CD14-positive monocyte (primary cell): ENCODE measurements at regions of chr14 and their contacts with region 1.

Region 1: GRCh38 chr14:105527661-105528581 is 1.5 kb downstream of the TMEM121 start:
- DNase-seq: peak; percentile 59 to 74 (median 61)
- H3K4me3 ChIP-seq: peak overlapping the region; percentile 28 to 75 (median 31)
- H3K4me3 Mint-ChIP-seq: peak overlapping the region; percentile 56 to 83
- H3K27ac ChIP-seq: no peak overlapping the region
- H3K27ac Mint-ChIP-seq: no peak overlapping the region
- H3K4me1 ChIP-seq: peaks cover 30 to 35% of the 10 kb centered on the region in 2 donors
- H3K4me1 Mint-ChIP-seq: peaks cover 28% of the 10 kb centered on the region
- H3K27me3 ChIP-seq: peaks cover 36 to 57% of the 10 kb centered on the region in 2 donors
- H3K27me3 Mint-ChIP-seq: peaks cover 46 to 84% (median 60%) of the 10 kb centered on the region in 3 donors
- CTCF ChIP-seq: peak; percentile 93

Region 2: DNA sequence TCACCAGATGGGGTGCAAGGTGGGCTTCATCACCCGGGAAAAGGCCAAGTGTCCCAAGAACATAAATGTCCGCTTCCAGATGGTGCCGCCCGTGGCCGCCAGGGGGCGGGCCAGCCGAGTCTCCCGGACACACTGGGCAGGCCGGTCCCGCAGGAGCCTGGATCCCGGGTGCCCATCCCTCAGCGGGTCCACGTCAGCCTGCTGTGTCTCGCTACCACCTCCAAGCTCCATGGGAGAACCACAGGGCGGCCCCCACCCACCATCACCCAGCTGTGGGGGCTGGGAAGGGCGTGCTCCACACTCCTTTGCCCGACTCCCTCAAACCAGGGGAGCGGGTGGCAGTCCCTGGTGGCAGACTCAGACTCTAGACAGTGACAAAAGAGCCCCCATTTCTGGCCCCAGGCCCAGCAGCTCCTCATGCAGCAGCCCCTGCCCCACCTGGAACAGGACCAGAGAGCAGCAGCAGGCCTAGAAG is 324.8 kb before region 1 on chr14:
- intact Hi-C with region 1: loop called in 1 of 2 experiments (anchors 5 kb)
- DNase-seq: peak; percentile 42 to 59 (median 57)
- H3K4me3 ChIP-seq: no peak overlapping the region
- H3K4me3 Mint-ChIP-seq: no peak overlapping the region
- H3K27ac ChIP-seq: no peak overlapping the region
- H3K27ac Mint-ChIP-seq: no peak overlapping the region
- H3K4me1 ChIP-seq: peaks cover 21 to 25% of the 10 kb centered on the region in 2 donors
- H3K4me1 Mint-ChIP-seq: peaks cover 19% of the 10 kb centered on the region
- H3K27me3 ChIP-seq: peaks cover 0 to 52% of the 10 kb centered on the region in 2 donors
- H3K27me3 Mint-ChIP-seq: peaks cover 38 to 69% (median 38%) of the 10 kb centered on the region in 3 donors
- CTCF ChIP-seq: peak; percentile 98

Region 3: DNA sequence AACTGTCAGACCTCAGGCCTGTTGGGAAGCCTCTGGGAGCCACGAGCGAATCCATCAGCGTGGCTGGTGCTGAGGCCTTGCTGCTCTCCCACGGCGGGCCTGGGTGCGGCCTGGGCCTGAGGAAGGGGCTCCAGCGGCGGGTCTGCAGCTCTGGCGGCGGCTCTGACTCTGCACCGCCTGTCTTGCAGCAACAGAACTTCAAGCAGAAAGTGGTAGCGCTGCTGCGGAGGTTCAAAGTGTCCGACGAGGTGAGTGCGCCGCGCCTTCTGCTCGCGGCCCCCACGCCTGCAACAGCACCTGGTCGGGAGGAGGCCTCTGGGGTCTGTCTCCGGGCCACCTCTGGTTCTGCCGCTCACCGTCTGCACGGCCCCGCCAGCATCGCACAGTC is 158.3 kb before region 1 on chr14:
- intact Hi-C with region 1: loop called (anchors 2 kb)
- DNase-seq: no peak
- H3K4me3 ChIP-seq: no peak overlapping the region
- H3K4me3 Mint-ChIP-seq: no peak overlapping the region
- H3K27ac ChIP-seq: no peak overlapping the region
- H3K27ac Mint-ChIP-seq: no peak overlapping the region
- H3K4me1 ChIP-seq: peaks cover 3 to 6% of the 10 kb centered on the region in 2 donors
- H3K4me1 Mint-ChIP-seq: peaks cover 5% of the 10 kb centered on the region
- H3K27me3 ChIP-seq: no peaks in the 10 kb centered on the region
- H3K27me3 Mint-ChIP-seq: peaks cover 1 to 7% (median 4%) of the 10 kb centered on the region in 3 donors
- CTCF ChIP-seq: no peak

Region 4: DNA sequence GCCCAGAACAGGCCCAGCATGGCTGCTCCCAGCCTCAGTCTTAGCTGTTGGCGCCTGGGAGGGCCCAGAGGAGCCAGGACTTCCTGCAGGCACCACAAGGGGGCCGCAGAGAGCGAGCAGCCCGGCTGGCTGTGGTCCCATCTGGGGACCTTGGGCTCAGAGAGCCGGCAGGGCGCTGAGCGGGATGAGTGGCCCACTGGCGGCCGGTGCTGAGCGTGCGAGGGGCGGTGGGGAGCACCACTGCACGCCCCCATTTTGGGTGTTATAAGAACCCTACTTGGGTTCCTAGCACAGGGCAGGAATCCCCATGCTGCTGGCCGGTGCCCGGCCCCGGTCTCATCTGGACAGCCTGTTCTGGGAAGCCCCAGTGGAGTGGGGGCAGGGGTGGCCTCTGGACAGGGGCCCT is 79.2 kb before region 1 on chr14:
- intact Hi-C with region 1: loop called in 1 of 2 experiments (anchors 10 kb)
- DNase-seq: peak; percentile 35 to 53 (median 51)
- H3K4me3 ChIP-seq: no peak overlapping the region
- H3K4me3 Mint-ChIP-seq: no peak overlapping the region
- H3K27ac ChIP-seq: no peak overlapping the region
- H3K27ac Mint-ChIP-seq: peak overlapping the region in 1 of 7 donors; percentile 11
- H3K4me1 ChIP-seq: no peaks in the 10 kb centered on the region
- H3K4me1 Mint-ChIP-seq: no peaks in the 10 kb centered on the region
- H3K27me3 ChIP-seq: no peaks in the 10 kb centered on the region
- H3K27me3 Mint-ChIP-seq: no peaks in the 10 kb centered on the region
- CTCF ChIP-seq: peak; percentile 84

Region 5: DNA sequence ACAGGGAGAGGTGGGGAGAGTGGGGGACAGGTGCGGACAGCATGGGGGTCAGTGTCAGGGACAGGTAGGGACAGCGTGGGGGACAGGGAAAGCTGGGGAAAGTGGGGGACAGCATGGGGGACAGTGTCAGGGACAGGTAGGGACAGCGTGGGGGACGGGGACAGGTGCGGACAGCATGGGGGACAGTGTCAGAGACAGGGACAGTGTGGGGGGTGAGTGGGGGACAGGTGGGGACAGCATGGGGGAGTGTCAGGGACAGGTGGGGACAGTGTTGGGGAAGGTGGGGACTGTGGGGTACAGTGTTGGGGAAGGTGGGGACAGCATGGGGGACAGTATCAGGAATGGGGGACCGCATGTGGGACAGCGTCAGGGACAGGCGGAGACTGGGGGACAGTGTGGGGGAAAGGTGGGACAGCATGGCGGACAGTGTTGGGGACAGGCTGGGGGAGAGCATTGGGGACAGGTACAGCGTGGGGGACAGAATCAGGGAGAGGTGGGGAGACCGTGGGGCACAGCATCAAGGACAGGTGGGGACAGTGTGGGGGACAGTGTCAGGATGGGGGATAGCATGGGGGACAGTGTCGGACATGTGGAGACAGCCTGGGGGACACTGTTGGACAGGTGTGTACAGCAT is 94.5 kb after region 1 on chr14:
- intact Hi-C with region 1: no loop called
- DNase-seq: peak in 1 of 3 donors; percentile 6
- H3K4me3 ChIP-seq: no peak overlapping the region
- H3K4me3 Mint-ChIP-seq: no peak overlapping the region
- H3K27ac ChIP-seq: no peak overlapping the region
- H3K27ac Mint-ChIP-seq: no peak overlapping the region
- H3K4me1 ChIP-seq: no peaks in the 10 kb centered on the region
- H3K4me1 Mint-ChIP-seq: no peaks in the 10 kb centered on the region
- H3K27me3 ChIP-seq: no peaks in the 10 kb centered on the region
- H3K27me3 Mint-ChIP-seq: peaks cover 1 to 4% (median 1%) of the 10 kb centered on the region in 3 donors
- CTCF ChIP-seq: no peak